Caco-2 (cell line): ENCODE measurements at regions of chr3 and their contacts with region 1.

Region 1: GRCh38 chr3:18424729-18425640 is at the start of gene SATB1:
- DNase-seq: peak; percentile 49 to 54
- H3K4me3 ChIP-seq: peak within 1 kb of the TSS; percentile 72
- H3K4me3 Mint-ChIP-seq: peak within 1 kb of the TSS; percentile 86
- H3K27ac Mint-ChIP-seq: peak within 1 kb of the TSS; percentile 76
- H3K4me1 ChIP-seq: no peaks in the 10 kb centered on the region
- H3K4me1 Mint-ChIP-seq: peaks cover 11% of the 10 kb centered on the region
- H3K27me3 ChIP-seq: no peaks in the 10 kb centered on the region
- H3K27me3 Mint-ChIP-seq: no peaks in the 10 kb centered on the region
- CTCF ChIP-seq: no peak
- total RNA-seq, gene SATB1: 13.8 and 16.4 TPM in 2 replicates

Region 2: DNA sequence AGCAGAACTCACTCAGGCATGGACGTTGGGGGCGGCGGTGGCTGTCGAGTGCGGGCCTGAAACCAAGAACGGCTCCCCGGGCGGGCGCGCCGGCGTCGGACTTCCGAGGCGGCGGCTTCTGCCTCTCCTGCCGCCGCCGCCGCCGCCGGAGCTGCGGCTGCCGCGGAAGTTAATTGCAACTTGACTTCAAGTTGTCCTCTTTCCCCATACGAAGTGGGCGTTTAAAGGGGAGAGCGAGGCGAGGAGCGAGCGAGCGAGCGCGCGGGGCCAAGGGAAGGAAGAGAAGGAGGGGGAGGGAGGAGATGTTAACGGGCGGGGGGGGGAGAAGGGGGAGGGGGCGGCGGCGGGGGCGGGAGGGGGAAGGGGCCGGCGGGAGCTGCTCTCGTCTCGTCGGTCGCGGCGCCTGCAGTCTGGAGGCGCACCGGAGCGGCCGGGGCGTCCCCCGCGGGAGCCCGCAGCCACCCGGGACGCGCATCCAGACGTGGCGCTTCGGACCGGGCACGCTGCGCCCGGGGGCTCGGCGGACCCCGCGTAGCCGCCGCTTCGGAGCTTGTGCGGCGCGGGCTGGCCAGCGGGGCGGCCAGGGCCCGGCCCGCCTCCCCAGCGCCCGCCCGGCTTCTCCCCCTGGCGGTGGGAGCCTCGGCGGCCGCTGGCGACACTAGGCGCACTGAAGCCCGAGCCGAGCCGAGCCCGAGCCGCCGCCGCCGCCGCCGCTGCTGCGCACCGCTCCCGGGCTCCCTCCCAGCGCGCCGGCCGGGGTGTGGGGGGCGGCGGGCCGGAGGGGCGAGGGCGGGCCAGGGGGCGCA is 19.8 kb after region 1 on chr3:
- CTCF ChIA-PET with region 1: no interaction called
- POLR2A ChIA-PET with region 1: interaction called, 5 read pairs
- intact Hi-C with region 1: loop called (anchors 1 kb)
- DNase-seq: peak; percentile 50 to 83
- H3K4me3 ChIP-seq: peak overlapping the region; percentile 41
- H3K4me3 Mint-ChIP-seq: peak overlapping the region; percentile 93
- H3K27ac Mint-ChIP-seq: peak overlapping the region; percentile 77
- H3K4me1 ChIP-seq: no peaks in the 10 kb centered on the region
- H3K4me1 Mint-ChIP-seq: no peaks in the 10 kb centered on the region
- H3K27me3 ChIP-seq: no peaks in the 10 kb centered on the region; the same call in 1 of the 2 replicates
- H3K27me3 Mint-ChIP-seq: no peaks in the 10 kb centered on the region
- CTCF ChIP-seq: peak; percentile 20 to 44